ENCODE measurements at regions of chr20 and their contacts with region 1.

Region 1: DNA sequence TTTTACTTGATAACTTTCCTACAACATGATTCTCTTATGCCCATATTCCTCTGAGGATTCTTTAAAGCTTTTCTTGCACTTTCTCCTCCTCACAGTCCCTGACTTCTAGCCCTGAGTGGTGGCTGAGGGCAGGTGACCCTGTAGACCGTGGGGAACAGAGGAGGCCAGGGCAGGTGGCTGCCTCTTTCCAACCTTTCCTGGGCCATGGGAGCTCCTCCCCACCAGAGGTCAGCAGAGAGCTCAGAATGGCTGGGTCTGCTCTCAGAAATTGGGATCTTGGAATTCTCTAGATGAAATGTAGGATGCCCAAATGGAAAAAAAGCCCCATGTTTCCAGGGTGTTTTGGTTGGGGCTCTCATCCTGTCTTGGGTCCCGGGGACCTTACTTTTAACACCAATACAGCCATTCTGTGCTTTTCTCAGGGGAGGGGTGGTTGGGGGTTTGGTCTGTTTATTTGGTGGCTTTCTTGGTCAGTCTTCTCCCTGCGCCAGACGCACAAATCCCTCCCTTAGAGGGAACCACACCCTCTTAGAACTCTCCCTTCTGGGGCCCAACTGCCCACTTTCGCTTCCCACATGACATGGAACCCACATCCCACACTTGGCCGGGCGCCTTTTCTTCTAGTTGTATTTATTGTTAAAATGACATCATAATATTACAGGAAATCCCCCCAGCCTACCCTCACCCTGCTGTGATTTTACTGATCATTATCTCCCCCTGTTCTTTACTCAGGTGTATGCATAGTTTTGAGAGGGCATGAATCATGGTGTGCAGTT is 17.9 kb downstream of the GNAS start:
- DNase-seq: peak in 4 of 5 donors; percentile 42 to 60 (median 48)
- H3K4me3 ChIP-seq: no peak overlapping the region
- H3K4me3 Mint-ChIP-seq: peak overlapping the region in 1 of 8 donors; percentile 32
- H3K27ac ChIP-seq: no peak overlapping the region
- H3K27ac Mint-ChIP-seq: peak overlapping the region in 1 of 7 donors; percentile 57
- H3K4me1 ChIP-seq: no peaks in the 10 kb centered on the region
- H3K4me1 Mint-ChIP-seq: peaks cover 0 to 3% (median 0%) of the 10 kb centered on the region in 4 donors
- H3K27me3 ChIP-seq: no peaks in the 10 kb centered on the region
- H3K27me3 Mint-ChIP-seq: no peaks in the 10 kb centered on the region

Region 2: GRCh38 chr20:59120491-59120890 is 250.1 kb after region 1 on chr20:
- CTCF ChIA-PET with region 1: no interaction called
- POLR2A ChIA-PET with region 1: no interaction called
- intact Hi-C with region 1: no loop called
- DNase-seq: peak; percentile 52 to 69 (median 64)
- H3K4me3 ChIP-seq: no peak overlapping the region
- H3K4me3 Mint-ChIP-seq: peak overlapping the region; percentile 32 to 89 (median 71)
- H3K27ac ChIP-seq: peak overlapping the region; percentile 80
- H3K27ac Mint-ChIP-seq: peak overlapping the region; percentile 94 to 100 (median 99)
- H3K4me1 ChIP-seq: peaks cover 86% of the 10 kb centered on the region
- H3K4me1 Mint-ChIP-seq: peaks cover 66 to 94% (median 86%) of the 10 kb centered on the region in 4 donors
- H3K27me3 ChIP-seq: no peaks in the 10 kb centered on the region
- H3K27me3 Mint-ChIP-seq: no peaks in the 10 kb centered on the region

Region 3: GRCh38 chr20:59403261-59403961 is 533.0 kb after region 1 on chr20:
- CTCF ChIA-PET with region 1: interaction called, 9 read pairs
- POLR2A ChIA-PET with region 1: interaction called, 3 read pairs
- intact Hi-C with region 1: loop called (anchors 1 kb)
- DNase-seq: peak; percentile 50 to 75 (median 62)
- H3K4me3 ChIP-seq: peak overlapping the region in 1 of 2 donors; percentile 33
- H3K4me3 Mint-ChIP-seq: peak overlapping the region in 4 of 8 donors; percentile 49 to 77 (median 76)
- H3K27ac ChIP-seq: no peak overlapping the region
- H3K27ac Mint-ChIP-seq: peak overlapping the region in 2 of 7 donors; percentile 49 to 55
- H3K4me1 ChIP-seq: peaks cover 32% of the 10 kb centered on the region
- H3K4me1 Mint-ChIP-seq: peaks cover 0 to 4% (median under 1%) of the 10 kb centered on the region in 4 donors
- H3K27me3 ChIP-seq: no peaks in the 10 kb centered on the region
- H3K27me3 Mint-ChIP-seq: peaks cover 17 to 22% of the 10 kb centered on the region in 2 donors

Region 4: DNA sequence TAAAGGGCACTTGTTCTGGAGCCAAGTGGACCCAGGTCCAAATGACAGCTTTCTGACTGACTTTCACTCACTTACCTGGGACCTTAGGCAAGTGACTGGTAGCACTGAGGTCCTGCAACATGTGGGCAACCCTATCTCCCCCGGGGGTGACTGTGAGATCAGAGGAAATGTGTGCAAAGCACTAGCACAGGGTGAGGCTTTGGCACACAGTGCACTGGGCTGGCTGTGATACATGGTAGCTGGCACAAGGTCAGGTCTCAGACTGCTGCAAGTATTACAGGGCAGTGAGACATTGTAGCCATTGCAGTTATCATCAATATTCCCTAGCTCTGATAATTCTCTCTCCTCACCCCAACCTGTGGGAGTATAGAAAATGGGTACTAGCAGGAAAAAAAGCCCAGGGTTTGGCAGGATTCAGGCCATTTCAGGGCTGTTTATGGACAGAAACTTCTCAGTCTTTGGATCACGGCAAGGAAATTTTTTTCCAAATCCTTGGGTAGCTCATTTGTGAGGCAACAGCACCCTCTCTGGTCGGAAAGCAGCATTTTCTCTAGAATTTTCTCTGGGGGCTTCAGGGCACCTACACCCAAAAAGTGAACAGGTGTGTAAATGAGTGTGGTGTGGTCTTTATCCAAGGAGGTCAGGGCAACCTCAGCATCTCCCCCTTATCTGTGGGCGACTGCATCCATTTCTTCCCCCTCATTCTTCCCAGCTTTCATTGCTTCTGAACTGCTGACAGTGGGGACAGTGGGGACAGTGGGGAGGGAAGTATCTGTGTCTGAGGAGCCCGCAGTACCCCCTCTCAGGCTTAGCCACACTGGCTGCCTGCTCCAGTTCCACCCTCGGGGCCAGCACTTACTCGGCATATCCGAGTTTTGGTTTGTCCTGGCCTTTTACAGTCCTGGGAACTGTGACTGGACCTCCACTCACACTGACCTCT is 585.2 kb after region 1 on chr20:
- CTCF ChIA-PET with region 1: interaction called, 7 read pairs
- POLR2A ChIA-PET with region 1: no interaction called
- intact Hi-C with region 1: loop called (anchors 2 kb)
- DNase-seq: peak in 2 of 5 donors; percentile 0 to 1
- H3K4me3 ChIP-seq: no peak overlapping the region
- H3K4me3 Mint-ChIP-seq: no peak overlapping the region
- H3K27ac ChIP-seq: no peak overlapping the region
- H3K27ac Mint-ChIP-seq: no peak overlapping the region
- H3K4me1 ChIP-seq: no peaks in the 10 kb centered on the region
- H3K4me1 Mint-ChIP-seq: no peaks in the 10 kb centered on the region
- H3K27me3 ChIP-seq: no peaks in the 10 kb centered on the region
- H3K27me3 Mint-ChIP-seq: peaks cover 4 to 29% of the 10 kb centered on the region in 2 donors

Measured in CD4-positive, alpha-beta memory T cell (primary cell).